ENCODE measurements at regions of chr2 and their contacts with region 1.

Region 1: DNA sequence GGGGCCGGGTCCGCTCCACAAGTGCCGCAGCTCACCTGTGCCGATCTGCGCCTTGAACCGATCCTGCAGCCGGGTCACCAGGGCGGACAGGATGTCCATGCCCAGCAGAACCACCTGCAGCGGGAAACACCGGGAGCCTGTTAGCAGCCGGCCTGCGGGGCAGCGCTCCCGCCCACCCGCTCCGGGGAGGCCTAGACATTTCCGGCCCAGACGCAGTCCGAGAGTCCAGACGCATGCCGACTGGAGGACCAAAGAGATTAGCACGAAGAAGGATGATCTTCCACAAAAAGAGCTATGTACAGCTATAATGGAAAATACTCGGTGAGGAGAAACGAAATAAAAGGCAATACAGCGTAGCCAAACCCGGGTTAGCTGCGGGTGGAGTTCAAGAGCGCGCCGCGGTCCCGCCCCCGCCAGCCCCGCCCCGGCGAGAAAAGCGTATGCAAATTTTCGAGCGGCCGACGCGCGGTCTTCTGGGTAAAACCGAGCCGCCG is 421 bp upstream of the RNU4ATAC start:
- DNase-seq: peak in 31 of 35 experiments; percentile 73 to 90 (median 83)
- ATAC-seq: peak; percentile 73 to 85 (median 81)
- H3K4me3 ChIP-seq: peak overlapping the region; percentile 76 to 93
- H3K4me3 Mint-ChIP-seq: peak overlapping the region; percentile 82 to 93 (median 92)
- H3K27ac ChIP-seq: peak overlapping the region; percentile 97
- H3K27ac Mint-ChIP-seq: peak overlapping the region; percentile 98 to 100
- H3K4me1 ChIP-seq: peaks cover 0 to 18% of the 10 kb centered on the region in 2 experiments
- H3K4me1 Mint-ChIP-seq: peaks cover 31 to 48% (median 42%) of the 10 kb centered on the region in 3 donors
- H3K27me3 ChIP-seq: no peaks in the 10 kb centered on the region
- H3K27me3 Mint-ChIP-seq: no peaks in the 10 kb centered on the region

Region 2: GRCh38 chr2:121649596-121650314 is 119.5 kb after region 1 on chr2:
- CTCF ChIA-PET with region 1: interaction called, 4 to 24 read pairs
- POLR2A ChIA-PET with region 1: interaction called, 3 to 30 read pairs
- DNase-seq: peak; percentile 83 to 99 (median 97)
- ATAC-seq: peak; percentile 93 to 96 (median 94)
- H3K4me3 ChIP-seq: peak overlapping the region; percentile 71 to 92
- H3K4me3 Mint-ChIP-seq: peak overlapping the region; percentile 95 to 97 (median 96)
- H3K27ac ChIP-seq: peak overlapping the region; percentile 90
- H3K27ac Mint-ChIP-seq: peak overlapping the region; percentile 99 to 100
- H3K4me1 ChIP-seq: peaks cover 20 to 26% of the 10 kb centered on the region in 2 experiments
- H3K4me1 Mint-ChIP-seq: peaks cover 68 to 86% (median 74%) of the 10 kb centered on the region in 3 donors
- H3K27me3 ChIP-seq: no peaks in the 10 kb centered on the region
- H3K27me3 Mint-ChIP-seq: no peaks in the 10 kb centered on the region

Region 3: GRCh38 chr2:121699421-121700333 is 169.4 kb after region 1 on chr2:
- CTCF ChIA-PET with region 1: interaction called in 1 of 2 experiments, 16 read pairs
- POLR2A ChIA-PET with region 1: interaction called in 1 of 2 experiments, 15 read pairs
- DNase-seq: peak; percentile 51 to 90 (median 77)
- ATAC-seq: peak; percentile 97 to 98 (median 98)
- H3K4me3 ChIP-seq: peak overlapping the region; percentile 41 to 64
- H3K4me3 Mint-ChIP-seq: peak overlapping the region; percentile 70 to 80 (median 75)
- H3K27ac ChIP-seq: peak overlapping the region; percentile 94
- H3K27ac Mint-ChIP-seq: peak overlapping the region; percentile 95
- H3K4me1 ChIP-seq: peaks cover 6 to 28% of the 10 kb centered on the region in 2 experiments
- H3K4me1 Mint-ChIP-seq: peaks cover 30 to 46% (median 41%) of the 10 kb centered on the region in 3 donors
- H3K27me3 ChIP-seq: no peaks in the 10 kb centered on the region
- H3K27me3 Mint-ChIP-seq: no peaks in the 10 kb centered on the region

Region 4: GRCh38 chr2:121722479-121722878 is 192.2 kb after region 1 on chr2:
- CTCF ChIA-PET with region 1: interaction called, 4 to 11 read pairs
- POLR2A ChIA-PET with region 1: interaction called, 3 to 5 read pairs
- DNase-seq: no peak
- ATAC-seq: no peak
- H3K4me3 ChIP-seq: no peak overlapping the region
- H3K4me3 Mint-ChIP-seq: no peak overlapping the region
- H3K27ac ChIP-seq: no peak overlapping the region
- H3K27ac Mint-ChIP-seq: peak overlapping the region in 1 of 2 donors; percentile 16
- H3K4me1 ChIP-seq: peaks cover 0 to 9% of the 10 kb centered on the region in 2 experiments
- H3K4me1 Mint-ChIP-seq: peaks cover 0 to 9% (median 4%) of the 10 kb centered on the region in 3 donors
- H3K27me3 ChIP-seq: no peaks in the 10 kb centered on the region
- H3K27me3 Mint-ChIP-seq: no peaks in the 10 kb centered on the region

Region 5: DNA sequence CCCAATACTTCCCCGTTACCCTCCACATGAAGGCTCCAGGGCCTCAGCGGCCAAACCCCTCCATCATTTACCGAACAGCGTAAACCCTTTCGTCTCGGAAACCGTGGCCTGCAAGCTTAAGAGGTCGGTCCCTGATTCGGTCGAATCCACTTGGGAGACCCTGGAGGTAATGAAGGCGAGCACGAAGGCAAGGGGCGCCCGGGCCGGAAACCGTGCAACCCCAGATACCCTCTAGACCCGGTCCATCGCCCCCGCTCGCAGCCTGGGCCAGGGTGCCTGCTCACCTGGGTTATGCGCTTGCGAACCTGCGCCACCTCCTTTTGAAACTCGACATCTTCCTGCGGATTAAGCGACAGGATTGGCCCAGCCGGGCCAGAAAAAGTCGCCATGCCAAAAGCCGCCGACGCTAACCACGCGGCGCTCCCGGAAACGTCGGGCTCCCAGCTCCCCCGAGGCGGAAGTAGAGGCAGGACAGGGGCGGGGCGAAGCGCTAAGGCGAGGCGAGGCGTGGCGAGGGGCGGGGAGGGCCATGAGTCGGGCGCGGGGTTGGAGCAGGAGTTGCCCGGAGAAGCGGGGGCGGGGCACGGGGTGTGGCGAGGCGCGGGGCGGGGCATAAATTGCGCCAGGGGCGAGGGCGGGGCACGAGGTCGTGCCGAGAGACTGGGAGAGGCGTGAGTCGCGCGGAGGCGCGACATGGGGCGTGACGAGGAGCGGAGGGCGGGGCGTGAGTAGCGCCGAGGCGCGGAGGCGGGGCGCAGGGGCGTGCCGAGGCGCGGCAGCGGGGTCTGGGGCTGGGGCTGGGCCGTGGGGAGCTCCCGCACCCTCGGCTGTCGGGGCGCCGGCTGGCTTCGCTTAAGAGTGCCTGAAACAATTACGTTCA is 206.4 kb after region 1 on chr2 and contains the start of gene NIFK:
- CTCF ChIA-PET with region 1: interaction called in 1 of 2 experiments, 18 read pairs
- POLR2A ChIA-PET with region 1: interaction called, 4 to 31 read pairs
- DNase-seq: peak; percentile 98 to 100 (median 100)
- ATAC-seq: peak; percentile 88 to 96 (median 88)
- H3K4me3 ChIP-seq: peak within 1 kb of the TSS; percentile 98 to 100
- H3K4me3 Mint-ChIP-seq: peak within 1 kb of the TSS; percentile 96 to 100 (median 97)
- H3K27ac ChIP-seq: peak within 1 kb of the TSS; percentile 80
- H3K27ac Mint-ChIP-seq: peak within 1 kb of the TSS; percentile 95 to 96
- H3K4me1 ChIP-seq: peaks cover 21 to 26% of the 10 kb centered on the region in 2 experiments
- H3K4me1 Mint-ChIP-seq: peaks cover 44 to 57% (median 45%) of the 10 kb centered on the region in 3 donors
- H3K27me3 ChIP-seq: no peaks in the 10 kb centered on the region
- H3K27me3 Mint-ChIP-seq: no peaks in the 10 kb centered on the region
- total RNA-seq, gene NIFK: 29.0 to 60.0 (median 53.9) TPM

Measured in T-cell (primary cell).